PC-3 (cell line): ENCODE measurements at regions of chr4 and their contacts with region 1.

Region 1: DNA sequence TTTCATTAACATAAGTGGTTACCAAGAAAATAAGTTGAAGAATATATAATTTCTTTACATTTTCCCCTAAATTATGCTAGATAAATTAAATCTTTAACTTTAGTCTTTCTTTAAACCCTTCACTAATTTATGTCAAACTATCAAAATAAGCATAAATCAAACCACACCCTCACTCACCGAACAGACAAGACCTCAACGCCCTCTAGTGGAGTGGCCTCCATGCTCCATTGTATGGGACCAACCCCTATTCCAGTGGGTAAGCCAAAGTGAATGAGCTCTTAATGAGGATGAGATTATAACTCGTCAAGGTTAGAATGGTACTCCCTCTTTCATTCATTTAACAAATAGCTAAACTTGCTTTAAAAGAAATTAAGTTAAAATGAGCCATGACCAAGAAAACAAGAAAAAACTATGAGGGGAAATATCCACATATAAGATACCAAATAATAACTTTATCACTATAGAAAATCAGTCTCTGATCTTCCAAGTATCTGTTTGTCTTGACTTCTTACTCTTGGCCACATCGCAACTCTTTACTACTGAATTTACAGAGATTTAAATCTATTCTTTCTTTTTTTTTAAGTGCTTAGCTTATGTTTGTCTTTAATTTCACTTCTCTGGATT is 15.6 kb upstream of the BBS12 start:
- DNase-seq: peak; percentile 76
- ATAC-seq: peak; percentile 79
- H3K4me3 ChIP-seq: no peak overlapping the region
- H3K27ac ChIP-seq: no peak overlapping the region
- H3K4me1 ChIP-seq: no peaks in the 10 kb centered on the region
- H3K27me3 ChIP-seq: no peaks in the 10 kb centered on the region
- CTCF ChIP-seq: peak; percentile 87

Region 2: DNA sequence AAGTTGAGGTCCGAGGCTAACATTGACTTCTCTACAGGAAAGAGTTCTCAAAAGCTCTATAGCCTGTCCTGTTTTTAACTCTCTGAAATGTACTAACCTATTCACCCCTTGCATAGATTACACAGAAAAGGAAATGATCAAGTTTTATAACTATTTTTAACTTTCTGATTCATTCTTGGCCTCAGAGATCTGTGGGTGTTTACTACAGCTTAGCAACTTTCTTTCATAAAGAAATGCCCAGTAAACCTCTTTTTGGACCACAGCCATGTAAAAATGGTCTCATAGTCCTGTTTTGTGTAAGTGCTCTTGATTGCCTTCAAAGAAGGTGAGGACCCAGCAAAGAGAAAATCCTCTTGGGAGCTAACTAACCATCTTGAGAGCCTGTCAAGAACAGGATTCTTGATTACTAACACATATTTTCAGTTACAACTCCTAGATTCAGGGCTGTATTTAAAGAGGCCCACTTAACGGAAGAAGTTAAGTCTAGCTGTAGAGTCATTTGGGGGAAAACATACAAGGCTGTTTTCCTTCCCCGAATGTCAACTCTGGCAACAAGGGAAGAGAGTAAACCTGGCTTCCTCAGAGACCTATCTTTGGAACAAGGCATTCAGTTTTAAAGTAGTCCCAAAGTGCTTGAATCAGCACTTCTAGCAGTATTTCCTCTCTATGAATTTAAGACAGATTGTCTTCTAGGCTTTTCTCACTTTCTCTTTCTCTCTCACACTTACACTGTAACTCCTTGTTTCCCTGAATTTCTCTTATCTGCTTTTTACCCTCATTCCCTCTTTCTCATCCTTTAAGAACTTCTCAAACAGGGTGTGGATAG is 174.3 kb before region 1 on chr4:
- CTCF ChIA-PET with region 1: no interaction called
- POLR2A ChIA-PET with region 1: no interaction called
- intact Hi-C with region 1: no loop called
- DNase-seq: peak; percentile 19
- ATAC-seq: no peak
- H3K4me3 ChIP-seq: no peak overlapping the region
- H3K27ac ChIP-seq: no peak overlapping the region
- H3K4me1 ChIP-seq: no peaks in the 10 kb centered on the region; the same call in 1 of the 2 replicates
- H3K27me3 ChIP-seq: no peaks in the 10 kb centered on the region
- CTCF ChIP-seq: no peak

Region 3: DNA sequence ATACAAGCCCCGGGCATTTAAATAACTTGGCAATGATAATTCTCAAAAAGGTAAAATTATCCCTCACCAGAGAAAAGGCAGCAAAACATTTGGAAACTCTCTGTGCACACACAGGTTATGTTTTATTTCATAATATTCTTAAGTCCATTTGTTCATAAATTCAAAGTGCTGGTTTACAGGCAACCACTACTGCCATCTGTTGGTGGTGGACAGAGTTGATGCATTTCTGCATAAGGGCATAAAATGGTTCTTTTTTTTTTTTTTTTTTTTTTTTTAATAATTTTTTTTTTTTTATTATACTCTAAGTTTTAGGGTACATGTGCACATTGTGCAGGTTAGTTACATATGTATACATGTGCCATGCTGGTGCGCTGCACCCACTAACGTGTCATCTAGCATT is 64.6 kb before region 1 on chr4:
- CTCF ChIA-PET with region 1: no interaction called
- POLR2A ChIA-PET with region 1: no interaction called
- intact Hi-C with region 1: loop called (anchors 5 kb)
- DNase-seq: peak; percentile 66
- ATAC-seq: no peak
- H3K4me3 ChIP-seq: no peak overlapping the region
- H3K27ac ChIP-seq: no peak overlapping the region
- H3K4me1 ChIP-seq: no peaks in the 10 kb centered on the region
- H3K27me3 ChIP-seq: no peaks in the 10 kb centered on the region
- CTCF ChIP-seq: peak; percentile 51